ENCODE measurements at regions of chr3 and their contacts with region 1.

Region 1: GRCh38 chr3:149466192-149466591 is 8.3 kb upstream of the TM4SF4 start:
- DNase-seq: peak in 1 of 2 experiments; percentile 7
- H3K4me3 ChIP-seq: no peak overlapping the region
- H3K27ac ChIP-seq: no peak overlapping the region
- H3K4me1 ChIP-seq: peaks cover 0 to 4% (median 0%) of the 10 kb centered on the region in 4 experiments; a peak in 3 of 7 replicates
- H3K27me3 ChIP-seq: no peaks in the 10 kb centered on the region
- CTCF ChIP-seq: no peak
- EP300 ChIP-seq: no peak
- POLR2A ChIP-seq: no peak
- RAD21 ChIP-seq: no peak

Region 2: GRCh38 chr3:149480325-149481017 is 14.3 kb after region 1 on chr3:
- CTCF ChIA-PET with region 1: interaction called, 24 read pairs
- POLR2A ChIA-PET with region 1: interaction called, 3 read pairs
- DNase-seq: peak; percentile 80 to 90
- H3K4me3 ChIP-seq: no peak overlapping the region
- H3K27ac ChIP-seq: no peak overlapping the region
- H3K4me1 ChIP-seq: no peaks in the 10 kb centered on the region
- H3K27me3 ChIP-seq: no peaks in the 10 kb centered on the region
- CTCF ChIP-seq: peak; percentile 90 to 95 (median 92)
- EP300 ChIP-seq: no peak
- POLR2A ChIP-seq: no peak
- RAD21 ChIP-seq: peak; percentile 93 to 95

Region 3: GRCh38 chr3:149512209-149512782 is 46.1 kb after region 1 on chr3:
- CTCF ChIA-PET with region 1: no interaction called
- POLR2A ChIA-PET with region 1: no interaction called
- DNase-seq: peak in 1 of 2 experiments; percentile 72
- H3K4me3 ChIP-seq: peak overlapping the region in 1 of 4 experiments; percentile 34; a peak in 1 of 8 replicates
- H3K27ac ChIP-seq: no peak overlapping the region
- H3K4me1 ChIP-seq: no peaks in the 10 kb centered on the region
- H3K27me3 ChIP-seq: no peaks in the 10 kb centered on the region
- CTCF ChIP-seq: peak; percentile 81 to 92 (median 89)
- EP300 ChIP-seq: no peak
- POLR2A ChIP-seq: no peak
- RAD21 ChIP-seq: peak; percentile 92 to 93

Measured in H1 (cell line).